Calu3 (cell line): ENCODE measurements at regions of chr7 and their contacts with region 1.

Region 1: DNA sequence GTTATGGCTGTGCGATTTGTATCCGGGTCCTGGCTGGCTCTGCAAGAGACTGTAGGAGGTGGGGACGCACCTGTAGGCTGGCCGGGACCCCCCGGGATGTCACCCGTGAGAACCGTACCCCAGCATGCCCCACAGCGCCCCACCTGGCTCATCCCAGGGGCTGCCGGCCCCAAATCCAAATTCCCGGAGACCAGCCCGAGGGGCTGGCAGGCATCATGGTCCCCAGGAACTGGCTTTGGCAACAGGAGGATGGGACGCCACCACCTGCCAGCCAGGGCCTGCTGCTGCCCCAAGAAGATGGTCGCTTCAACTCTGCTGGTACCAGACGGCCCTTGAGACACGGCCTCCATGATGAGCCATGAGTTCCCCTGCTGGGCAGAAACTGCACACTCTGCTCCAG is 239.4 kb downstream of the ELFN1 start:
- DNase-seq: no peak
- H3K4me3 Mint-ChIP-seq: no peak overlapping the region
- H3K27ac Mint-ChIP-seq: no peak overlapping the region
- H3K4me1 Mint-ChIP-seq: no peaks in the 10 kb centered on the region
- H3K27me3 Mint-ChIP-seq: no peaks in the 10 kb centered on the region
- CTCF ChIP-seq: peak; percentile 17

Region 2: GRCh38 chr7:2063575-2064257 is 154.2 kb after region 1 on chr7:
- CTCF ChIA-PET with region 1: interaction called, 13 read pairs
- intact Hi-C with region 1: no loop called
- DNase-seq: peak; percentile 57
- H3K4me3 Mint-ChIP-seq: no peak overlapping the region
- H3K27ac Mint-ChIP-seq: no peak overlapping the region
- H3K4me1 Mint-ChIP-seq: peaks cover 11% of the 10 kb centered on the region
- H3K27me3 Mint-ChIP-seq: no peaks in the 10 kb centered on the region
- CTCF ChIP-seq: no peak